ENCODE measurements at regions of chr5 and their contacts with region 1.

Region 1: DNA sequence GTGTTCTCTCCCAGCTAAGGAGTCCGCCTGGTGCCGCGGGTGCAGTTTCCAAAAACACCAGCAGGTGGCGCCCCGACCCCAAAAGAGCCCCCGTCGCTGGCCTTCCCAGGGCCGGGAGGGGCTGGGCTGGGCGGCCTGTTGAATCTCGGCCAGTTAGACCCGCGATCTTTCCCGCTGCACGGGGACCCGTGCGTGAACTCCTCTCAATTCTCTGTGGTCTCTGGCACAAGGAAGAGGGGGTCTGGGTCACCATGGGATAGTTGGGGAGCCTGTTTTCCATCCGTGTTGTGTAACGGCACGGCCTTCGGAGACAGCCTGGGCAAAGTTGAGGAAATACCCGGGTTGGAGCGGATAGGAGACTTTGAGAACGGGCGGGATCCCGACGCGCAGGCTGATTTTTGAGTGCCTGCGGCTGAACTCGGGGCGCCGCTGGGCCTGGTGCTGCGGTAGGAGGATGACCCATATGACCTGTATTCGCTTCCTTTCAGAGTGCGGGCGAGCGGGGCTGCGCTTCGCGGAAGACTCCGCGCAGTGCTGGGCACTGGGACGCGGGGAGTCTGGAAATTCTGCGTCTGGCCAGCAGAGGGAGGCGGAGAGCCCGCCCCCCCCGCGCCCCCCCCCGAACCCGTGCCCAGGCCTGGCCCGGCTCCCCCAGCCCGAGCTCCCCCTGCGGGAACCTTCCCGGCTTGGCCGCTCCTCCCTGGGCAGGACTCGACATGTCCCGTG is 7.9 kb upstream of the PSD2 start:
- DNase-seq: peak; percentile 83 to 91 (median 87)
- ATAC-seq: peak; percentile 89
- H3K4me3 ChIP-seq: peak overlapping the region; percentile 2 to 37
- H3K27ac ChIP-seq: peak overlapping the region in 2 of 4 donors; percentile 13 to 33
- H3K4me1 ChIP-seq: peaks cover 6% of the 10 kb centered on the region
- H3K27me3 ChIP-seq: no peaks in the 10 kb centered on the region
- CTCF ChIP-seq: peak; percentile 86 to 98 (median 94)
- POLR2A ChIP-seq: no peak

Region 2: GRCh38 chr5:139869042-139869790 is 81.5 kb after region 1 on chr5:
- intact Hi-C with region 1: loop called (anchors 5 kb)
- DNase-seq: no peak
- ATAC-seq: peak; percentile 38
- H3K4me3 ChIP-seq: no peak overlapping the region
- H3K27ac ChIP-seq: peak overlapping the region in 2 of 4 donors; percentile 47 to 53
- H3K4me1 ChIP-seq: no peaks in the 10 kb centered on the region
- H3K27me3 ChIP-seq: no peaks in the 10 kb centered on the region
- CTCF ChIP-seq: no peak
- POLR2A ChIP-seq: no peak

Region 3: DNA sequence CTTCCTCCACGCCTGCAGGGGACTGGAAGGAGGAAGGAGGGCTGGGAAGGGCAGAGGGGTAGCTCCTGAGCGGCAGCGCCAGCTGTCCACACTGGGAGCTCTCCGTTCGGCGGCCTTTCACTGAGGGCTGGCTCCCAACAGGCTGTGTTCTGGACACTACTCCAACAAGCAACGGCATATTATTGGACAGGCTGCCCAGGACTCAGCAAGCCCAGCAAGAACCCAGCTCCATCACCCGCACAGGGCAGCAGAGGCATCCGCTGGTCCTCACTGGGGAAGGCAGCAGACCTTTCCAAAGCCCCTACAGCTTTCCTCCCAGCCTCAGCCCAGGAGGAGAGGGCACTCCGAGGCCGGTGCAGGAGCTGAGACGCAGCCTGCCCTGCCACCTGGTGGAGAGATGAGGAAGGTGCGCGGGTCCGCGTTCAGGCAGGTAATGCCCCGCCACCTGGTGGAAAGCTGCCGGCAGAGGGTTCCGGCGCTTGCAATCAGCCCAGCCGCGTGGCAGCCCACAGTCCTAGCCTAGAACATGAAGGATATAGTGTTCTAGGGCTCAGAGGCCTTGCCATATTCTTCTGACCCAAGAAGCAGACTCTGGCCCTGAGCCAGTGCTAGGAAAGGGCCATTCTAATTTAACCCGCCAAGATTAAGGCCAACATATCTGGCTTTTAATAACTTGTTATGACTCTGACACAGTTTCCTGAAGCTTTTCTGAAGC is 181.0 kb after region 1 on chr5:
- intact Hi-C with region 1: loop called (anchors 5 kb)
- DNase-seq: peak; percentile 92 to 96 (median 94)
- ATAC-seq: peak; percentile 99
- H3K4me3 ChIP-seq: no peak overlapping the region
- H3K27ac ChIP-seq: no peak overlapping the region
- H3K4me1 ChIP-seq: peaks cover 15% of the 10 kb centered on the region
- H3K27me3 ChIP-seq: no peaks in the 10 kb centered on the region
- CTCF ChIP-seq: peak; percentile 99 to 100 (median 100)
- POLR2A ChIP-seq: no peak

Region 4: DNA sequence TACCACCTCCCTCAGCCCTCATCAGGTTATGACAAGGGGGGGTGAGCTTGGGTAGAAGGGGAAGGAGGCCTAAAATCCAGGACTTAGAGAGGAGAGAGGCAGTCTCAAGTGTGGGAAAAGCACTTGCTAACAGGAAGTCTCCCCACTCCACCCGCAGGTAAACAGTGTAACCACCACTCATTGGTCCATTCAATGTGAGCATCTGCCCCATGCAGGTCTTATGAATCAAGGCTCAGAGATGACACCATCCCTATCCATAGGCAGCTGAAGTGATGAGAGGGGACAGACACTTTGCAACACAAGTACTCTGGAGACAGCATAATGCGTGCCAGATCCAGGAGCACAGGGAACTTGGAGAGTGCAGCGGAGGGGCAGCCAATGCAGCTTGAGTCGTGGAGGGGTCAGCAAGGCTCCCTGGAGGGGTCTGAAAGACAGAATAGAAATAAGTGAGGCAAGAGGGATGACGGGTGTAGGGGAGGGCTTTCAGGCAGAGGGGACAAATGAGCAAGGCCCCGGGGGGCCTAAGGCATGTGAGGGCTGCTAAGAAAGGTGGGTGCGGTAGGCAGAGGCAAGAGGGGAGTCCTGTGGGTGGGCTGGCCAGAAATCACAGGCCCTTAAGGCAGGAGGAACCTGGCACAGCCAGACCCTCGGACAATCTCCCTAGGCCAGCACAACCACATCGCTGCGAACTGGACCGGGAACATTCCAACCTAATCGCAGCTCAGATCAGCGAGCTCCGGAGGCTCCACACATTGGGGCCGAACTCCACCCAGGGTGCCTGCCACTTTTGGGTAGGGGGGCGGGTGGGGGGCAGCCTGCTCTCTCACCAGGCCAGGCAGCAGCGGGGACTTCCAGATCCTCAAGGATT is 364.2 kb after region 1 on chr5:
- intact Hi-C with region 1: loop called (anchors 5 kb)
- DNase-seq: no peak
- ATAC-seq: no peak
- H3K4me3 ChIP-seq: no peak overlapping the region
- H3K27ac ChIP-seq: no peak overlapping the region
- H3K4me1 ChIP-seq: peaks cover 8% of the 10 kb centered on the region
- H3K27me3 ChIP-seq: no peaks in the 10 kb centered on the region
- CTCF ChIP-seq: no peak
- POLR2A ChIP-seq: no peak

Region 5: GRCh38 chr5:140966293-140967225 is 1178.8 kb after region 1 on chr5 and contains the start of gene PCDHAC2:
- intact Hi-C with region 1: no loop called
- DNase-seq: peak; percentile 34 to 65 (median 50)
- ATAC-seq: peak; percentile 80
- H3K4me3 ChIP-seq: peak within 1 kb of the TSS; percentile 24 to 50
- H3K27ac ChIP-seq: peak within 1 kb of the TSS in 1 of 4 donors; percentile 54
- H3K4me1 ChIP-seq: peaks cover 15% of the 10 kb centered on the region
- H3K27me3 ChIP-seq: no peaks in the 10 kb centered on the region
- CTCF ChIP-seq: no peak
- POLR2A ChIP-seq: peak in 2 of 3 donors; percentile 23 to 25
- total RNA-seq, gene PCDHAC2: 1.6 to 2.3 TPM

Measured in body of pancreas (tissue), 4 donors.